OCI-LY7 (cell line): ENCODE measurements at regions of chr12 and their contacts with region 1.

Region 1: GRCh38 chr12:56189176-56189917 is at the start of gene SMARCC2:
- DNase-seq: peak; percentile 90
- H3K4me3 ChIP-seq: peak within 1 kb of the TSS; percentile 79
- H3K27ac ChIP-seq: peak within 1 kb of the TSS; percentile 72
- H3K4me1 ChIP-seq: peaks cover 40% of the 10 kb centered on the region
- CTCF ChIP-seq: peak; percentile 77
- total RNA-seq, gene SMARCC2: 59.7 and 68.3 TPM in 2 replicates

Region 2: GRCh38 chr12:55728939-55729823 is 460.2 kb before region 1 on chr12 and contains the start of gene CD63:
- CTCF ChIA-PET with region 1: no interaction called
- POLR2A ChIA-PET with region 1: no interaction called
- intact Hi-C with region 1: no loop called
- DNase-seq: peak; percentile 75
- H3K4me3 ChIP-seq: peak within 1 kb of the TSS; percentile 77
- H3K27ac ChIP-seq: peak within 1 kb of the TSS; percentile 67
- H3K4me1 ChIP-seq: peaks cover 29% of the 10 kb centered on the region
- CTCF ChIP-seq: 0 out of 2 replicates have a peak, but pooled peaks have one; percentile 16
- total RNA-seq, gene CD63: 102 and 143 TPM in 2 replicates

Region 3: GRCh38 chr12:55966408-55967281 is 222.7 kb before region 1 on chr12 and contains the start of gene CDK2:
- CTCF ChIA-PET with region 1: no interaction called
- POLR2A ChIA-PET with region 1: no interaction called
- intact Hi-C with region 1: no loop called
- DNase-seq: peak; percentile 93
- H3K4me3 ChIP-seq: peak within 1 kb of the TSS; percentile 91
- H3K27ac ChIP-seq: peak within 1 kb of the TSS; percentile 37
- H3K4me1 ChIP-seq: peaks cover 29% of the 10 kb centered on the region
- CTCF ChIP-seq: no peak
- total RNA-seq, gene CDK2: 57.8 and 68.1 TPM in 2 replicates

Region 4: DNA sequence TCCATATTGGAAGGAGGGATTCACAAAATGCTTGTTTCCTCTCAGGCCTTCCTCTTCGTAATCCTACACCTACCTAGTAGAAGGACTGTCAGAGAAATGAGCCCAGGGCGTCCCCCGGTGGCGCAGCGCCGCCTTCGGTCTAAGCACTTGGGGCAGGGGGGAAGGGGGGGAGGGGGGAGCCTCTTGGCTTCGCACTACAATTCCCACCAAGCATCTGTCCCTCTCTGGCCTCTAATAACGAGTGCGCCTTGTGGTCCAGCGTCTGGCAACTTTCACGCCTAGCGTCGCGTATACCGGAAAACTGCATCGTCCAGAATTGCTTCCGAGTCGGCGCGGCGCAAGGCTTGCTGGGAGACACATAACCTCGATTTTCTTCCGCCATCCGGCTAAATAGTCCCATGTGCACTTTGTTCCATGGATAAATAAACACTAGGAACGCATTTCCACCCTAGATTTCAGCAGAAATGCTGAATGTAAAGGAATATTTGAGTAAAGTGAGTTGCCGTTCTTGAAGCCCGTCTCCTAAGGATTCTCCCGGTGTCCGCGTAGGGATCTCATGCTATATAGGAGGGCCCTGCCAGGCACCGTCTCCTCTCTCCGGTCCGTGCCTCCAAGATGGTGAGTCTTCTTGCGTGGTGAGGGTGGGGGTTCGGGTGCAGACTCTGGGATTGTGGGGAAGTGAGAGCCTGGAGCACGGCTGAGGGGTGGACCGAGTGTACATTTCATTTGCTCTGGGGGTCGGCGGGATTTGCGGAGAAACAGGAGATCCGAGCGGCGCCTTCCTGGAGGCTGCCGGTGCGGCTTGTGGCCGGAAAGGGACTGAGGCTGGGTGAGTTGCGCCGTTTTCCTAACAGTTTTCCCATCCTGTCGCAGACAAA is 147.6 kb before region 1 on chr12 and contains the start of gene RPS26:
- CTCF ChIA-PET with region 1: no interaction called
- POLR2A ChIA-PET with region 1: no interaction called
- intact Hi-C with region 1: loop called (anchors 5 kb)
- DNase-seq: peak; percentile 100
- H3K4me3 ChIP-seq: peak within 1 kb of the TSS; percentile 83
- H3K27ac ChIP-seq: peak within 1 kb of the TSS; percentile 67
- H3K4me1 ChIP-seq: peaks cover 43% of the 10 kb centered on the region
- CTCF ChIP-seq: peak; percentile 77
- total RNA-seq, gene RPS26: 306 and 600 TPM in 2 replicates

Region 5: GRCh38 chr12:56143870-56144269 is 45.5 kb before region 1 on chr12:
- CTCF ChIA-PET with region 1: interaction called, 10 read pairs
- POLR2A ChIA-PET with region 1: no interaction called
- intact Hi-C with region 1: no loop called
- DNase-seq: no peak
- H3K4me3 ChIP-seq: no peak overlapping the region
- H3K27ac ChIP-seq: no peak overlapping the region
- H3K4me1 ChIP-seq: no peaks in the 10 kb centered on the region
- CTCF ChIP-seq: no peak

Region 6: GRCh38 chr12:56224102-56224701 is 34.9 kb after region 1 on chr12 and contains the start of gene NABP2:
- CTCF ChIA-PET with region 1: interaction called, 12 read pairs
- POLR2A ChIA-PET with region 1: interaction called, 23 read pairs
- intact Hi-C with region 1: loop called (anchors 1 kb)
- DNase-seq: peak; percentile 98
- H3K4me3 ChIP-seq: peak within 1 kb of the TSS; percentile 83
- H3K27ac ChIP-seq: peak within 1 kb of the TSS; percentile 41
- H3K4me1 ChIP-seq: peaks cover 40% of the 10 kb centered on the region
- CTCF ChIP-seq: peak; percentile 96
- total RNA-seq, gene NABP2: 37.5 and 46.0 TPM in 2 replicates

Region 7: GRCh38 chr12:56299853-56300643 is 110.7 kb after region 1 on chr12 and contains the start of gene CS:
- CTCF ChIA-PET with region 1: no interaction called
- POLR2A ChIA-PET with region 1: interaction called, 4 read pairs
- intact Hi-C with region 1: loop called (anchors 2 kb)
- DNase-seq: peak; percentile 100
- H3K4me3 ChIP-seq: peak within 1 kb of the TSS; percentile 79
- H3K27ac ChIP-seq: peak within 1 kb of the TSS; percentile 75
- H3K4me1 ChIP-seq: peaks cover 62% of the 10 kb centered on the region
- CTCF ChIP-seq: no peak
- total RNA-seq, gene CS: 150 and 154 TPM in 2 replicates

Region 8: DNA sequence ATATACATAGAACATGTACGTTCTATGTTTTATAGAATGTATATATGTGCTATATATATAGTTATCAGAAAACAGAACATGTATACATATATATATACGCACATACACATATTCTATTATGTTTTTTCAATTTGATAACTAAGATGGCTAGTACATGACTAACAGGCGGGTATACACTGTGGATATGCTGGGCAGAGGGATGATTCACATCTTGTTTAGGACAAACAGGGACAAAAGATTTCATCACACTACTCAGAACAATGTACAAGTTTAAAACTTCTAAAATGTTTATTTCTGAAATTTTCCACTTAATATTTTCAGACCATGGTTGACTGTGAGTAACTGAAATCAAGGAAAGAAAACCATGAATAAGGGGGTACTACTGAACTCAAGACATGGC is 242.5 kb after region 1 on chr12:
- CTCF ChIA-PET with region 1: no interaction called
- POLR2A ChIA-PET with region 1: no interaction called
- intact Hi-C with region 1: no loop called
- DNase-seq: no peak
- H3K4me3 ChIP-seq: no peak overlapping the region
- H3K27ac ChIP-seq: no peak overlapping the region
- H3K4me1 ChIP-seq: no peaks in the 10 kb centered on the region
- CTCF ChIP-seq: no peak